ENCODE measurements at regions of chrX and their contacts with region 1.

Region 1: GRCh38 chrX:123450221-123450620 is 266.1 kb downstream of the GRIA3 start:
- DNase-seq: peak; percentile 3
- ATAC-seq: no peak
- H3K4me3 Mint-ChIP-seq: no peak overlapping the region
- H3K27ac Mint-ChIP-seq: no peak overlapping the region
- H3K4me1 Mint-ChIP-seq: no peaks in the 10 kb centered on the region
- H3K27me3 Mint-ChIP-seq: peaks cover 1% of the 10 kb centered on the region

Region 2: GRCh38 chrX:123513585-123514278 is 63.5 kb after region 1 on chrX:
- CTCF ChIA-PET with region 1: no interaction called
- POLR2A ChIA-PET with region 1: no interaction called
- intact Hi-C with region 1: no loop called
- DNase-seq: no peak
- ATAC-seq: no peak
- H3K4me3 Mint-ChIP-seq: peak overlapping the region; percentile 33
- H3K27ac Mint-ChIP-seq: no peak overlapping the region
- H3K4me1 Mint-ChIP-seq: no peaks in the 10 kb centered on the region
- H3K27me3 Mint-ChIP-seq: no peaks in the 10 kb centered on the region

Region 3: DNA sequence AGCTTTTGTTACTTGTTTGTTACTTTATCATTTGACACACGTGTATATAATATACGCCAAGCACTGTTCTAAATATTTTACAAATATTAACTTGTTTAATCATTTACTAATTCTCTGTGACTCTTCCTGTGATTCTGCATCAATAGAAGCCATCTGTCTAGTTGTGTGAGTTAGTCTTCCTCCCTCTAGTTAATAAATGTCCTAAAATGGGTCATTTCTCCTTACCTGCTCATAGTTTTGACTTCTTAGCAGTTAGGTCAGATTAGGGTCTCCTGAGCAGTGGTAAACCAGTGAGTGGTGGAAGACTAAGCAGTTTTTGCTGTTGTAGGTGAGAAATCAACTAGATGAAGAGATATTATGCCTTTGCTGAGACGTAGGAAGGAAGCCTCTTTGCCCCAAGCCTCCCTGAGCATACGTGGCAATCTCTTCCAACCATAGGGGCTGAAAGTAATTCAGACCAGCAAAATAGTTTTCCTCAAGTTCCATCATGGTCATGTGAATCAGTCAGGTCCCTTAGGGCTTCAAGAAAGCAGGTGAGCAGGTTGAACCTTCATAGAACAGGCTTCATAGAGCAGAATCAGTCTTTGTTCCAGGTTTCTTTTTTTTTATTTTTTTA is 321.3 kb after region 1 on chrX:
- CTCF ChIA-PET with region 1: no interaction called
- POLR2A ChIA-PET with region 1: no interaction called
- intact Hi-C with region 1: loop called in 1 of 2 experiments (anchors 10 kb)
- DNase-seq: no peak
- ATAC-seq: no peak
- H3K4me3 Mint-ChIP-seq: no peak overlapping the region
- H3K27ac Mint-ChIP-seq: no peak overlapping the region
- H3K4me1 Mint-ChIP-seq: peaks cover 3% of the 10 kb centered on the region
- H3K27me3 Mint-ChIP-seq: no peaks in the 10 kb centered on the region

Measured in activated CD4-positive, alpha-beta T cell treated with anti-CD3 and anti-CD28 coated beads for 36 hours (primary cell).